Activated CD8-positive, alpha-beta T cell treated with anti-CD3 and anti-CD28 coated beads for 36 hours (primary cell): ENCODE measurements at regions of chr4 and their contacts with region 1.

Region 1: DNA sequence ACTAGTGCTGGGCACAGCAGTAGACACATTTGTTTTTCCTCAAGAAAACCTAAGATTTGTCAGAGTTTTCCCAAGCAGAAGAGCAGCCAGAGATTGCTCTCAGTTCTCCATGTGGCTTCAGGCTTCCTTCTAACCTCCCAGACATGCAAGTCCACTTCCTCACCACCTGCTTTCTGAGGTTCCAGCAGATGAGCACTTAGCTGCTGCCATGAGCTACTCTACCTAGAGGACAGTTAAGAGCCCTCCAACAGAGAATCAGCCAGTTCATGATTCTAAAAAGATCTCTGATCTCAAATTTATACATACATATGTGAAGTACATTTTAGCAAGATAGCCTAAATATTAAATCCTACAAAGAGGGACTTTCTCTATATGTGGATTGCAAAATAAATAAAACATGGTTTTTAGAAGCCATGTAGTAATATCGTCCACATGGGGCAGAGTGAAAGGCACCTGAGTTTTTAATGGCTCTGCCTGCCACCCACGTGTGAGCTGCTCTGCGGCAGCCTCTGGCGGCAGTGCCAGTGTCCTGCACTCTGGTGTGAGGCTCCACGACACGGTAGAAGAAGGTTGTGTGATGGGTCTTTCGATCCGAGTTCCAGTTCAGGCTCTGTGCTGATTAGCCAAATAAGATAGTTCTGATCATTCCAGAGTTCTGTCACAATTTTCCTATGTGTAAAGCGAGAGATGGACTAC is 10.3 kb downstream of the CYP4V2 start:
- DNase-seq: peak; percentile 73
- ATAC-seq: peak; percentile 98
- H3K4me3 Mint-ChIP-seq: no peak overlapping the region
- H3K27ac Mint-ChIP-seq: peak overlapping the region; percentile 60
- H3K4me1 Mint-ChIP-seq: peaks cover 11% of the 10 kb centered on the region
- H3K27me3 Mint-ChIP-seq: no peaks in the 10 kb centered on the region
- CTCF ChIP-seq: peak; percentile 70

Region 2: DNA sequence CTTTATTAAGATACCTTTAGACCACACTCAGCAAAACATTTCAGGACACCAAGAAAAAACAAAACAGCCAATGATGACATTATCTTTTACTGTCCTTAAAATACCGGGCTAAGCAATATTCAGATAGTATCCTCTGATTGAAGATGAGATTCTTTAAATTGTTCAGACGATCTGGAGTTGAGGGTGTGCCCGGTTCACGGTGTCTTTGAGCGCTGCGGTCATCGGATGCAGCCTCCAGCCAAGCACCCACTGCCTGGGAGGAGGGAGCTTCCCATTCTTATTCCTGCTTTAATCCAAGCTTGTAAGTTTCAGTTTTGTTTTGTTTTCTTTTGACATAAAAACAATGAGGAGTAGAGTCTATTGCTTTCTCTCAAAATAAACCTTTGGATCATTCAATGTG is 83.1 kb before region 1 on chr4:
- CTCF ChIA-PET with region 1: no interaction called
- POLR2A ChIA-PET with region 1: no interaction called
- intact Hi-C with region 1: no loop called
- DNase-seq: no peak
- ATAC-seq: no peak
- H3K4me3 Mint-ChIP-seq: no peak overlapping the region
- H3K27ac Mint-ChIP-seq: no peak overlapping the region
- H3K4me1 Mint-ChIP-seq: no peaks in the 10 kb centered on the region
- H3K27me3 Mint-ChIP-seq: peaks cover 15% of the 10 kb centered on the region
- CTCF ChIP-seq: no peak

Region 3: DNA sequence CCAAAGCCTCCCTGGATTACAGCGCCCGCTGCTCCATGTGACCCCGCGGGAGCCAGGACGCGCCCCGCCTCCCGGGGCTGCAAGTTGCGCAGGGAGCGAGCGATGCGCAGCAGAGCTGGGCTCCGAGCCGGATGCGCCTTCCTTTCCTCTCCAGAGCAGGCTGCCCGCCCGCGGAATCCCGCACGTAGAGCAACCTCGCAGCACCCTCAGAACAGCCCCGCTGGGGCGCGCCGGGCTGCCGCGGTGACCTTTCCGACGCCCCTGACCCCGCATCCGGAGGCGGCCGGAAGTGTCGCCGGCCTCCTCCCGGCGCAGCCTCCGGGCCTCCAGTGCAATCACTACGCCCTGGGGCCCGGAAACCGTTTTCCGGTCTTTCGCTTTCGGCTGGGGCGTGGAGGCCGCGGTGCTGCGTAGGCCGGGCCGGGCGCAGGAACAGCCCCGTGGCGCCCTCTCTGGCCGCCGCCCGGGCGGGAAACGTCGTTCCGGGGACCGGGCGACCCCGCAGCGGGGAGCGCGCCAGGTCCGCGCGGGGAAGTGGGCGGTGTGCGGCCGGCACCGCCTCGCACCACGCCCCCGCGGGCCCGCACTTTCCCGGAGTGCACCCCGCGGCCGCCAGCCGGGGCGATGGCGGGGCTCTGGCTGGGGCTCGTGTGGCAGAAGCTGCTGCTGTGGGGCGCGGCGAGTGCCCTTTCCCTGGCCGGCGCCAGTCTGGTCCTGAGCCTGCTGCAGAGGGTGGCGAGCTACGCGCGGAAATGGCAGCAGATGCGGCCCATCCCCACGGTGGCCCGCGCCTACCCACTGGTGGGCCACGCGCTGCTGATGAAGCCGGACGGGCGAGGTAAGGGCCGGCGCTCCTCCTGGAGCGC is 10.2 kb before region 1 on chr4 and contains the start of gene CYP4V2:
- CTCF ChIA-PET with region 1: interaction called, 13 read pairs
- POLR2A ChIA-PET with region 1: interaction called, 4 read pairs
- intact Hi-C with region 1: no loop called
- DNase-seq: peak; percentile 91
- ATAC-seq: peak; percentile 86
- H3K4me3 Mint-ChIP-seq: peak within 1 kb of the TSS; percentile 97
- H3K27ac Mint-ChIP-seq: peak within 1 kb of the TSS; percentile 96
- H3K4me1 Mint-ChIP-seq: peaks cover 32% of the 10 kb centered on the region
- H3K27me3 Mint-ChIP-seq: no peaks in the 10 kb centered on the region
- CTCF ChIP-seq: peak; percentile 50
- total RNA-seq, gene CYP4V2: 4.8 to 5.1 TPM

Region 4: GRCh38 chr4:186216465-186217024 is 14.9 kb after region 1 on chr4:
- CTCF ChIA-PET with region 1: no interaction called
- POLR2A ChIA-PET with region 1: no interaction called
- intact Hi-C with region 1: no loop called
- DNase-seq: no peak
- ATAC-seq: no peak
- H3K4me3 Mint-ChIP-seq: no peak overlapping the region
- H3K27ac Mint-ChIP-seq: no peak overlapping the region
- H3K4me1 Mint-ChIP-seq: no peaks in the 10 kb centered on the region
- H3K27me3 Mint-ChIP-seq: no peaks in the 10 kb centered on the region
- CTCF ChIP-seq: no peak

Region 5: GRCh38 chr4:186240848-186241491 is 39.3 kb after region 1 on chr4:
- CTCF ChIA-PET with region 1: no interaction called
- POLR2A ChIA-PET with region 1: no interaction called
- intact Hi-C with region 1: no loop called
- DNase-seq: no peak
- ATAC-seq: no peak
- H3K4me3 Mint-ChIP-seq: no peak overlapping the region
- H3K27ac Mint-ChIP-seq: no peak overlapping the region
- H3K4me1 Mint-ChIP-seq: no peaks in the 10 kb centered on the region
- H3K27me3 Mint-ChIP-seq: no peaks in the 10 kb centered on the region
- CTCF ChIP-seq: no peak

Region 6: DNA sequence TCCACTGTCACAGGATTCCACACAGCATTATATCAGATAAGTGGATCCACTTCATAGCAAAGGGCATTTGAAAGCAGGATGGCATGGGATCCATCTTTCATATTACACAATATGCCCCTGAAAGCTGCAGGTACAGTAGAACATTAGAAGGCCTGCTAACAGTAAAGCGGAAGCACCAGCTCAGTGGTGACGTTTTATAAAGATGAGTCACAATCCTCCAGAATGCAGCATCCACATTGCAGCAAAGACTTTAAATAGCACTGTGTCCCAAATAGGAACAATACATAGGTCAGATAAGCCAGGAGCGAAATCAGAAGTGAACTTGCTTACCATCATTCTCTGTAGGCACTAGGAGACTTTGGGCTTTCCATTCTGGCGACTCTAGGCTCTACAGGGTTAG is 1131.5 kb after region 1 on chr4:
- CTCF ChIA-PET with region 1: no interaction called
- POLR2A ChIA-PET with region 1: no interaction called
- intact Hi-C with region 1: no loop called
- DNase-seq: no peak
- ATAC-seq: no peak
- H3K4me3 Mint-ChIP-seq: no peak overlapping the region
- H3K27ac Mint-ChIP-seq: no peak overlapping the region
- H3K4me1 Mint-ChIP-seq: no peaks in the 10 kb centered on the region
- H3K27me3 Mint-ChIP-seq: no peaks in the 10 kb centered on the region
- CTCF ChIP-seq: no peak